GM10248 (cell line): ENCODE measurements at regions of chr1 and their contacts with region 1.

Region 1: DNA sequence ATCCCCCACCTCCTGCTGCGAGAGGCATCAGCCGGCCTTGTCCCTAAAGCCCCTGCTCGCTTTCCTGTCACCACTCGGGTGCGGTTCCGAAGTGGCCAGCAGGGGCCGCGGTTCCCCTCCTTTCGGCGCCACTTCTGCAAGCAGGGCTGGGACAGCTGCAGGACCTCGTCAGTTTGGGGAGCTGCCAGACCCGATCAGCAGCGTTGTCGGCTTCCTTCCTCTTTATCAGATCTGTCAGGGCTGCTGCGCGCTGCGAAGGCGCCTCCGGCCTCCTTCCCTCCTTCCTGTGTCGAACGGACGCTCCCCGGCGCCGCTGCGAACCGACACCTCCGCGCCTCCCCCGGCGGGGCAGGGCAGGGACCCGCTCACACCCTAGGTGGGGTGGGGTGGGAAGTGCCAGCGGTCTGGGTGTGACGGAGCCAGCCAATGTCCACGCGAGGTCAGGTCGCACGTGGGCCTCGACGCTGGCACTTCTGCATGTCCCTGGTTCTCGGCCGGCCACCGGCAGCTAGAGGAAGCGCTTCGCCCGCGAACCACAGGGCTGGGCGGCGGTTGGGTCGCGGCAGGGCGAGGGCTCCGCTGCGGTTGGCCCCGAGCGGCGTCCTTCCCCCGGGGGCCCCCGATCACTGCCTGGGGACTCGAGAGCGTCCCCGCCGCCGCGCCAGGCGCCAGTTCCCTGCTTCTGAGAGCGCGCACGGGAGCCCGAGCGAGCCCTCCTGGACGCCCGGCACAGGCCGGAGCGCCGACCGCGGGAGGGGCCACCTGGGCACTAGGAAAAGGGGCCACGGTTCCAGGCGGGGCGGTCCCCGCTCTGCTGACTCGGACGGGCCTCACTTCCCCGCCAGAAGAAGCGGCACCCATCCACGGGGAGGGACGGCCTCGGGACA is 81.8 kb downstream of the RUNX3 start:
- DNase-seq: peak; percentile 89
- CTCF ChIP-seq: peak; percentile 96

Region 2: GRCh38 chr1:24861821-24862727 is 13.8 kb after region 1 on chr1:
- CTCF ChIA-PET with region 1: interaction called, 14 read pairs
- POLR2A ChIA-PET with region 1: interaction called, 20 read pairs
- DNase-seq: no peak
- CTCF ChIP-seq: no peak

Region 3: DNA sequence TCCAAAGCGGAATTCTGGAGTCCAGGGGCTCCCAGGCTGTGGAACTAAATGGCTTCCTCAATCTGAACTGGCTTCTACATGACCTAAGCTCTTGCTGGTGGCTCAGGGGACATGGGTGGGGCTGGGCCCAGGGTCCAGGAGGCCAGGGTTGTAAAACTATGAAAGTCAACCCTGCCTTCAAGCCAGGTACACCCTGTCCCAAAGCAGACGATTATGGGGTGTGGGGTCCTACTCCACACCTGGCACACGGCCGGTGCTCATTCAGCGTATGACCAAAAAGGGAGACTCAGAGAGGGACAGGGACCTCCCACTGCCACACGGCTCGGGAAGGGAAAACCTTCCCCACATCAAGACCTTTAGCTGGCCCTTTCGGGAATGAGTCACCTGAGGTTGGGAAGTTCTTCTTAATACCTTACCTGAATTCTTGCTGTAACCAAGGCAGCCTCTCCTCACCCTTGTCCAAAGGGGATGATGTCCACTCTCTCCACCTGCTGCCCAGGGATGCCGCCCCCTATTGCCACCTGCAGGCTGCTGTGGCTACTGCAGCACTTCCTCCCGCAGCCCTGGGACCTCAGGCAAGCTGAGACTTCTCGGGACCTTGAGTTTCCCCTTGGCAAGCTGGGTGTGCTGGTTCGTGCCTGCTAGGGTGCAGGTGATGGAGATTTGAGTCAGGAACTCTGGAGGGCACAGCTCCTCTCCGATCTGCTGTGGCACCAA is 49.7 kb after region 1 on chr1:
- CTCF ChIA-PET with region 1: interaction called, 22 read pairs
- POLR2A ChIA-PET with region 1: no interaction called
- DNase-seq: peak; percentile 79
- CTCF ChIP-seq: peak; percentile 87

Region 4: GRCh38 chr1:24923485-24924113 is 75.4 kb after region 1 on chr1:
- CTCF ChIA-PET with region 1: interaction called, 8 read pairs
- POLR2A ChIA-PET with region 1: interaction called, 12 read pairs
- DNase-seq: peak; percentile 76
- CTCF ChIP-seq: no peak

Region 5: DNA sequence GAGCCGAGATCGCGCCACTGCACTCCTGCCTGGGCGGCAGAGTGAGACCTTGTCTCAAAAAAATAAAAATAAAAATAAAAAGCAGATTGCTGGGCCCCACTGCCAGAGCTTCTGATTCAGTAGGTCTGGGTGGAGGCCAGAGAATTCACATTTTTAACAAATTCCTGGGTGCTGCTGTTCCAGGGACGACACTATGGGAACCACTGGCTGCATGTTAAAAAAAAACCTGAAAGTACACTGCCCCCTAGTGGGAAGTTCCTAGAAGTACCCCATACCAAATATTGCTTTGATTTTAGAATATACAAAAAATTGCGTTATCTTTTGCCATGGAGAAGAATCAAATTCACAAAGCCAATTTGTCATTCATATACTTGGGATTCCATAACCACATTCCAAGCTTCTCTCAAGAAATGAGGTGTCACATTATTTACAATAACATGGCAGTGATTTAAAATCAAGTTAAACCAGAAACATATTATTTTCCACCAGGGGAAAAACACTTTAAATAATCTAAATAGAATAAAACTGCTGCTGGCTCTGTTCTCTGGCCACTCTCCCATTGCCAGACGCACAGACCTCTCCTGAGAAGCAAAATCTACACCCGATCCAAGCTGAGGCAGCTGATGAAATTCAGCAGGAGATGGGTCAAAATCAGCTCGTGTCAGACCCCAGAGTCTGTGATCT is 356.7 kb after region 1 on chr1:
- CTCF ChIA-PET with region 1: interaction called, 66 read pairs
- POLR2A ChIA-PET with region 1: no interaction called
- DNase-seq: peak; percentile 65
- CTCF ChIP-seq: peak; percentile 42